ENCODE measurements at regions of chr14 and their contacts with region 1.

Region 1: DNA sequence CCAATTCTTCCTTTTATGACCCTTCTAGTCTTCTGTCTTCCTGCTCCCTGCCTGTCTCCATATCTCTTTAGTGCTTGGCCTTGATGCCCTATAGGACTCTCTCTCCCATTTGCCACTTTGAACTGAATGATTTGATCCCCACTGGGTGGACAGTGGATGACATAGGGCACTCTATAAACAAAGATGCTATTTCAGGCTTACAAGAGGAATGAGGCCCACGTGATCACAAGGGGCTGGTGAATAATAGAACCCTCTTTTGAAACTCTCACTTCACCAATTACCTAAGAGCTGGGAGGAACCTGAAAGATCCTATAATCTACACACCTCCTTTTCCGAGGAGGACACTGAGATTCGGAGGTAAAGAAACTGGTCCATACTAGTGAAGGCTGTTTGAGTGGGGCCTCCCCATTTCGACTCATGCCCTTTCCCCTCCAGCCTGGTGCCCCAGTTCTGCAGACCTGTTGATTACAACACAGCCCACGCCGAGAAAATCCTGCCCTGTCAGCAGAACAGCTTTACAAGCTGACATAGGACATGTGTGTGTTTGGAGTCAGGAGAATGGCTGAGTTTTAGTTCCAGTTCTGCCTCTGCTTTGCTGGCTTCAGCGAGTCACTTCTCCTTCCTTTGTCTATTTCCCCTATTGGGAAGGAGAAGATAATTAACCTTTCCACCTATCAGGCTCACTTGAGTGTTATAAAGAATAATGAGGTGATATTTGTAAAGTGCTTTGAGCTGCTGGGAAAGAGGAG is 400.3 kb downstream of the ZFP36L1 start:
- DNase-seq: peak; percentile 62 to 80 (median 73)
- ATAC-seq: peak in 3 of 4 donors; percentile 47 to 52 (median 50)
- H3K4me3 ChIP-seq: no peak overlapping the region
- H3K27ac ChIP-seq: peak overlapping the region; percentile 46 to 92 (median 66)
- H3K4me1 ChIP-seq: peaks cover 4 to 75% (median 31%) of the 10 kb centered on the region in 12 donors
- H3K27me3 ChIP-seq: no peaks in the 10 kb centered on the region
- CTCF ChIP-seq: no peak
- POLR2A ChIP-seq: no peak

Region 2: GRCh38 chr14:68408680-68409079 is 16.1 kb after region 1 on chr14:
- intact Hi-C with region 1: no loop called
- DNase-seq: no peak
- ATAC-seq: no peak
- H3K4me3 ChIP-seq: no peak overlapping the region
- H3K27ac ChIP-seq: peak overlapping the region in 1 of 12 donors; percentile 27
- H3K4me1 ChIP-seq: peaks cover 0 to 48% (median 13%) of the 10 kb centered on the region in 12 donors
- H3K27me3 ChIP-seq: no peaks in the 10 kb centered on the region
- CTCF ChIP-seq: peak in 2 of 12 donors; percentile 7 to 19
- POLR2A ChIP-seq: no peak

Region 3: DNA sequence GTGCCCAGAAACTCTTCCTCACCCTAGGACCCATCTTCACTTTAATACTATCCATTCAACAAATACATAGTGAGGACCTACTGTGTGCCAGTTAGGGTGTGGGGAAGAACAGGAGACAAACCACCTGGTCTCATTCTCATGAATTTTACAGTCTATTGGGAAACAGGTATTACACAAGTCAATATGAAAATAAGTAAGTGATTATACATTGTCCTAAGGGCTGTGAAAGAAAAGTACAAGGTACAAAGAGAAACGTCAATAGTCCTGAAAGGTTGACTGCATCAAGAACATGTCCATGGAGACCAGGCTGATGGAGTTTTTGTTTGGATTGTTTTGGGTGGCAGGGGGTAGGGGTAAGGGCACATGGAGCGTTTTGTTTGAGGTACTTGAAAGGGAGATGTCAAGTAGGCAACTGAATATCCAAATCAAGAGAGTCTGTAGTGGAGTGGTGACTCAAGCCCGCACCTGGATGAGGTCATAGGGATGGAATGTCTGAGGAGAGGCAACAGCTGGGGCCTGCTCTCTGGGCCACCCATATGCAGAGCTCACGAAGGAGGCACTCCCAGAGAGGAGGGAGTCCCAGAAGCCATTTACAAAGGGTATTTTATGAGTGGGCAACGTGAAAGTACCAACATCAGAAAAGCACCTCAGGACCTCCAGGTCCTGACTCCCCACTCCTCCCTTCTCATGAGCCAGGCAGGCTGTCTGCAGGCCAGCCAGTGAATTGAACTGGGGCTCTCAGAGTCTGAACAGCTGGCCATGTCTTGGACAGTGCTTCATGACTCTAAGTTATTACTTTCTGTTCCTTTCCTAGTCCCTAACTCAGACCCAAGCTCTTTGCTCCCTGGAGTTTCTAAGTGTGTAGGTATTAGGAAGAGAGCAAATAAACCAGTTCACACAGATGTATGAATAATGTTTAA is 128.3 kb after region 1 on chr14:
- intact Hi-C with region 1: loop called in 2 of 10 experiments (anchors 5 to 10 kb)
- DNase-seq: no peak
- ATAC-seq: peak in 1 of 4 donors; percentile 30
- H3K4me3 ChIP-seq: no peak overlapping the region
- H3K27ac ChIP-seq: peak overlapping the region in 7 of 12 donors; percentile 51 to 74 (median 60)
- H3K4me1 ChIP-seq: peaks cover 0 to 74% (median 49%) of the 10 kb centered on the region in 12 donors
- H3K27me3 ChIP-seq: no peaks in the 10 kb centered on the region
- CTCF ChIP-seq: no peak
- POLR2A ChIP-seq: no peak

Region 4: GRCh38 chr14:68619816-68620574 is 227.4 kb after region 1 on chr14:
- intact Hi-C with region 1: no loop called
- DNase-seq: peak in 4 of 5 donors; percentile 72 to 83 (median 78)
- ATAC-seq: peak; percentile 96 to 99 (median 98)
- H3K4me3 ChIP-seq: no peak overlapping the region
- H3K27ac ChIP-seq: peak overlapping the region; percentile 64 to 95 (median 82)
- H3K4me1 ChIP-seq: peaks cover 0 to 36% (median 20%) of the 10 kb centered on the region in 12 donors
- H3K27me3 ChIP-seq: no peaks in the 10 kb centered on the region
- CTCF ChIP-seq: no peak
- POLR2A ChIP-seq: peak in 1 of 2 donors; percentile 16

Region 5: GRCh38 chr14:68633071-68633991 is 240.8 kb after region 1 on chr14:
- intact Hi-C with region 1: loop called in 1 of 10 experiments (anchors 10 kb)
- DNase-seq: peak; percentile 59 to 80 (median 66)
- ATAC-seq: peak; percentile 52 to 83 (median 67)
- H3K4me3 ChIP-seq: no peak overlapping the region
- H3K27ac ChIP-seq: peak overlapping the region; percentile 52 to 86 (median 75)
- H3K4me1 ChIP-seq: peaks cover 0 to 62% (median 41%) of the 10 kb centered on the region in 12 donors
- H3K27me3 ChIP-seq: no peaks in the 10 kb centered on the region
- CTCF ChIP-seq: no peak
- POLR2A ChIP-seq: no peak